WTC11 (cell line): ENCODE measurements at regions of chr21 and their contacts with region 1.

Region 1: DNA sequence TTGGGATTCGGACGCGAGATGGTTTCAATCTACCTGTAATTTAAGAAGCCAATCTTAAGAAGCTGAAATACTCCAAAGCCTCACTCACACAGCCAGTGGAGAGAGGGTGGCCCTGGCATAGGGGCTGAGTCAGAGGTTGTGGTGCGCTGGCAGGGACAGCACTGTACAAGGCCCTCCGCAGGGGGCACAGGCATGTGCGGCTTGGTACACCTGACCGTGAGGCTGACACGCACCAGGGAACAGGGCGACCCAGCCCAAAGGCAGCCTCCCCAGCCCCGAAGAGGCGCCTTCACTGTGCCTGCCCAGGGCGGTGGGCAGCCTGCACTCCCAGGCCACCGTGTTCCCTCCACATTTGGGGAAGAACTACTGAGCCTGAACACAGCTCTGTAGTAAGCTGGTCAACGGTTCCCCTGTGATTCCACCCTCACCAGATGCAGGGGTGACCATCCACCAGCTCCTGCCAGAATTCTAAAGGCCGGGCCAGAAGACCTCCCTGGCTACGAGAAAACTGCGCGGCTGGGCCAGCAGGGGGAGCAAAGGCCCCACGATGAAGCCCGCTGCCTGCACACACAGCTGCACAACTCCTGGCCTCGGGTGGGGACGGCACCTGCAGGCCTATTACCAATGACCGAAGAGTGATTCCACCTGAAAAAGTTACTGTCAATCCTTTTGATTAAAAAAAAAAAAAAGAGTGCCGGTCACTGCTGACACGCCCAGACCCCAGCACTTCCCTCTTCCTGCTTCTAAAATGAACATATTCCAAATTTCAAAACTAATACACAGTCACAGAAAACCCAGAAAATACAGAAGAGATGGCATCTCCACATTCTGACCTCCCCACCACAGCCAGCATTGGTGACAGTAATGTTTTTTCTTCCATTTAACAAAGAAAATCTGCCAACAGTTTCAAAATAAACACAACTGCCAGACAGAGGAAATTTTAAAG is 49.6 kb upstream of the RIPK4 start:
- DNase-seq: peak; percentile 75
- ATAC-seq: peak; percentile 73
- H3K4me3 Mint-ChIP-seq: no peak overlapping the region
- H3K27ac Mint-ChIP-seq: no peak overlapping the region
- H3K4me1 Mint-ChIP-seq: no peaks in the 10 kb centered on the region
- H3K27me3 Mint-ChIP-seq: no peaks in the 10 kb centered on the region
- CTCF ChIP-seq: peak; percentile 73

Region 2: GRCh38 chr21:41745971-41746743 is 70.3 kb before region 1 on chr21:
- CTCF ChIA-PET with region 1: interaction called, 11 read pairs
- POLR2A ChIA-PET with region 1: no interaction called
- DNase-seq: peak; percentile 44
- ATAC-seq: peak; percentile 69
- H3K4me3 Mint-ChIP-seq: no peak overlapping the region
- H3K27ac Mint-ChIP-seq: no peak overlapping the region
- H3K4me1 Mint-ChIP-seq: peaks cover 7% of the 10 kb centered on the region
- H3K27me3 Mint-ChIP-seq: no peaks in the 10 kb centered on the region
- CTCF ChIP-seq: no peak

Region 3: GRCh38 chr21:41777951-41778874 is 38.3 kb before region 1 on chr21:
- CTCF ChIA-PET with region 1: interaction called, 19 read pairs
- POLR2A ChIA-PET with region 1: no interaction called
- DNase-seq: peak; percentile 97
- ATAC-seq: peak; percentile 83
- H3K4me3 Mint-ChIP-seq: peak overlapping the region; percentile 47
- H3K27ac Mint-ChIP-seq: peak overlapping the region; percentile 67; the same call in 1 of the 2 replicates
- H3K4me1 Mint-ChIP-seq: peaks cover 25% of the 10 kb centered on the region
- H3K27me3 Mint-ChIP-seq: peaks cover 9% of the 10 kb centered on the region
- CTCF ChIP-seq: peak; percentile 63

Region 4: DNA sequence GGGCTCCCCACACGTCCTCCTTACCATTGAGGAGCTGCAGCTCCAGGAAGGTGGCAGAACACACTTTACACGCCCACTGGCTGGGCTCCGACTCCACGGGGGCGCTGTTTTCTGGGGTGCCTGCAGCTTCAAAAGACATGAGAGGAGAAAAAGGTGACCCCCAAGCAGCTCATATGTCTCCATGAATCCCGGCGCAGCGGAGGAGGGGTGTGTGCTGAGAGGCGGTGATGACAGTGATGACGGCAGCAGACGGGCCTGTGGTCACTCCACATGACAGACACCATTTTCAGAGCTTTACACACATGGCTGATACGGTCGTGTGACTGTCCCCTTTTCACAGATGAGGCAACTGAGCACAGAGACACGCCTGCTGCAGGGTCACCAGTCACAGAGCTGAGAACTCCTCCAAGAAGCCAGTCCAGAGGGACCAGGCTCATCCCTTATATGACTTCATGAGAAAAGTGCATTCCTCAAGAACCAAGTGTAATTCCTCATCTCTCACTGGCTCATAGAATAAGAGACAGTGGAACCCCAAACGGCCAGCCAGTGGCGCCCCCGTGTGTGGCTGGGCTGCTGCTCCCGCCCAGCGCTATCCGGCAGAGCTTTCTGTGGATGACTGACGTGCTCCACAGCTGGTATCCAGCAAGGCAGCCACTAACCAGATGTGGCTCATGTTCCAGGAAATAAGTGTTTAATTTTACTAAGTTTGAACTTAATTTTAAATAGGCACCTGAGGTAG is 30.7 kb after region 1 on chr21:
- CTCF ChIA-PET with region 1: interaction called, 30 read pairs
- POLR2A ChIA-PET with region 1: no interaction called
- DNase-seq: peak; percentile 52
- ATAC-seq: peak; percentile 76
- H3K4me3 Mint-ChIP-seq: no peak overlapping the region
- H3K27ac Mint-ChIP-seq: no peak overlapping the region
- H3K4me1 Mint-ChIP-seq: peaks cover 15% of the 10 kb centered on the region
- H3K27me3 Mint-ChIP-seq: no peaks in the 10 kb centered on the region
- CTCF ChIP-seq: no peak

Region 5: GRCh38 chr21:42913476-42913875 is 1097.0 kb after region 1 on chr21:
- CTCF ChIA-PET with region 1: no interaction called
- POLR2A ChIA-PET with region 1: no interaction called
- DNase-seq: no peak
- ATAC-seq: peak; percentile 62; the same call in 1 of the 2 replicates
- H3K4me3 Mint-ChIP-seq: no peak overlapping the region
- H3K27ac Mint-ChIP-seq: peak overlapping the region; percentile 82; the same call in 1 of the 2 replicates
- H3K4me1 Mint-ChIP-seq: peaks cover 7% of the 10 kb centered on the region; the same call in 1 of the 2 replicates
- H3K27me3 Mint-ChIP-seq: no peaks in the 10 kb centered on the region
- CTCF ChIP-seq: no peak